ENCODE measurements at regions of chr21 and their contacts with region 1.

Region 1: GRCh38 chr21:42496122-42496900 is at the start of gene RSPH1:
- H3K4me3 ChIP-seq: peak within 1 kb of the TSS; percentile 55
- H3K27ac ChIP-seq: no peak within 1 kb of the TSS; the same call in 1 of the 2 replicates
- H3K4me1 ChIP-seq: no peaks in the 10 kb centered on the region
- CTCF ChIP-seq: peak; percentile 71; the same call in 1 of the 2 replicates

Region 2: DNA sequence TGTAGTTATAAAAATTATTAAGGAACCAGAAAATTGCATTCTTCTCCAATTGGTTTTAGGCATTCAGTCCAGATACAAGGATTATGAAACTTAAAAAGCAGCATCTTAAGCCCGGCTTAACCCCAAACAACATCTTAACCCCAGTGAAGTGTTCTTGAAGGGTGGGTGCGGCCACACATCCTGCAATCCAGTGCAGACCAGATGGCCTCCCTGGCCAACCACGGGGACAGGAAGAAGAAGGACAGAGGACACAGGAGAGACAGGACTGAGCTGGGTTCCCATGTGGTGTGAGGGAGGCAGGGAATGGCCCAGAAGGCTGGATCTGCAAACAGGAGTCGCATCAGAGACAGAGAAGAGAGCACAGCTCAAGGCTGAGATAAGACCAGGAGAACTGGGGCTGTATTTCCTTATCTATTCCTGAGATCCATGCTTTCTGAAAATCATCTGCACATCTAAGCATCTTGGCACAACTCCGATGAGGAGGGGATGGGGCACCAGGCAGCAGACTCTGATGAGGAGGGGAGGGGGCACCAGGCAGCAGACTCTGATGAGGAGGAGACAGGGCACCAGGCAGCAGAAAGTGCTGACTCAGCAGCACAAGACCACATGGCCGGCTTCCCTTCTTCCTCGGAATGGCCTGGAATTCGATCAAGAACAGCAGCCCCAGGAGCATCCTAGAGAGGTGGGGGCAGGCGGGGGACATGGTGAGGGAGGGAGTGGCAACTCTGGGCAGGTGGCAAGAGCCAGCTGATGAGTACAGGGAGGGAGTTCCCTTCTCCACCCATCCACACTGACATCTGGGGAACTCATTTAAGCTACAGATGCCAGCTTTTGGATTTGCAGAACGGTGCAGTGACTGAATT is 250.7 kb before region 1 on chr21:
- CTCF ChIA-PET with region 1: no interaction called
- POLR2A ChIA-PET with region 1: no interaction called
- H3K4me3 ChIP-seq: no peak overlapping the region
- H3K27ac ChIP-seq: no peak overlapping the region
- H3K4me1 ChIP-seq: no peaks in the 10 kb centered on the region
- CTCF ChIP-seq: no peak

Region 3: DNA sequence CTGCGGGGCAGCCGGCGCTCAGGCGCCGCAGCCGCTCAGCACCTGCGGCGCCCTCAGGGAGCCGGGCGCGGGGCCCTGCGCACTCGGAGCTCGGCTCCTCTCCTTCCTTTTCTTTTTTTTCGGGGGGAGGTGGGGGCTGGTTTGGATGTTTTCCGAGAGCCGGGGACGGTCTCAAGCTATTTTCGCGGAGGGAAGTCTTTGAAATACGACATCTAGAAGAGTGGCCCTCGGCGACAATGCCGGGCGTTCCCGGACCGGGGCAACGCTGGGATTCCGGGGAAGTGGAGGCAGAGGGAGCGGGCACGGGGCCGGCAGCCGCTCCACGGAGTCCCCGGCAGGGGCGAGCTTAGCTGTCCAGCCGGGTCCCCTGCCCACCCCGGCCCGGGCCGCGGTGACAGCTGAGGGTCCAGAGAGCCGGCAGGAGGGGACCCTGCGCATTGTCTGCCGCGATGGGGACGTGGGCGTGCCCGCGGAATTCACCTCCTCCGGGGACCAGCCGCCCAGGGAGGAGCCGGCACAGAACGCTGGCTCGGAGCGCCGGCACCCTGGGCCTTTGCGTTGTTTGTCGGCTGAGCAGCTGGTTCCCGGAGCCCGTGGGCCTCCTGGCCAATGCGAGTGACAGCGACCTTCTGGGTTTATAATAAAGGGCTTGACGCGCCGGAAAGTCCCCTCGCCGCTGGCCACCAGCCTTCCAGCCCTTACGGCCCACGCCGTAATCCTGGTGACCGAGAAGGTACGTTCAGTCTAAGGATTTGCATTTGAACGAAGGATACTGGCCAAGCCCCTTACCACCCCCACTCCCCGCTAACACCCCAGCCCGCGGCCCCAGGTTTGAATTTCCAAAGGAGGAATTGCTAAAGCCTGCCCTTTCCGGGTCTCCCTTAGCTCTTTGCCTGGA is 17.9 kb after region 1 on chr21:
- CTCF ChIA-PET with region 1: interaction called, 17 read pairs
- POLR2A ChIA-PET with region 1: no interaction called
- H3K4me3 ChIP-seq: peak overlapping the region; percentile 63
- H3K27ac ChIP-seq: peak overlapping the region; percentile 61
- H3K4me1 ChIP-seq: peaks cover 16% of the 10 kb centered on the region
- CTCF ChIP-seq: no peak

Measured in HEK293 (cell line).